H1 (cell line): ENCODE measurements at regions of chr9 and their contacts with region 1.

Region 1: GRCh38 chr9:135602789-135603481 is 36.4 kb downstream of the GLT6D1 start:
- DNase-seq: peak; percentile 17 to 86
- H3K4me3 ChIP-seq: no peak overlapping the region
- H3K27ac ChIP-seq: no peak overlapping the region
- H3K4me1 ChIP-seq: peaks cover 0 to 8% (median 3%) of the 10 kb centered on the region in 4 experiments; a peak in 4 of 7 replicates
- H3K27me3 ChIP-seq: no peaks in the 10 kb centered on the region
- CTCF ChIP-seq: peak in 2 of 3 experiments; percentile 71 to 78; a peak in 3 of 4 replicates
- EP300 ChIP-seq: no peak
- POLR2A ChIP-seq: no peak
- RAD21 ChIP-seq: peak; percentile 51 to 55

Region 2: DNA sequence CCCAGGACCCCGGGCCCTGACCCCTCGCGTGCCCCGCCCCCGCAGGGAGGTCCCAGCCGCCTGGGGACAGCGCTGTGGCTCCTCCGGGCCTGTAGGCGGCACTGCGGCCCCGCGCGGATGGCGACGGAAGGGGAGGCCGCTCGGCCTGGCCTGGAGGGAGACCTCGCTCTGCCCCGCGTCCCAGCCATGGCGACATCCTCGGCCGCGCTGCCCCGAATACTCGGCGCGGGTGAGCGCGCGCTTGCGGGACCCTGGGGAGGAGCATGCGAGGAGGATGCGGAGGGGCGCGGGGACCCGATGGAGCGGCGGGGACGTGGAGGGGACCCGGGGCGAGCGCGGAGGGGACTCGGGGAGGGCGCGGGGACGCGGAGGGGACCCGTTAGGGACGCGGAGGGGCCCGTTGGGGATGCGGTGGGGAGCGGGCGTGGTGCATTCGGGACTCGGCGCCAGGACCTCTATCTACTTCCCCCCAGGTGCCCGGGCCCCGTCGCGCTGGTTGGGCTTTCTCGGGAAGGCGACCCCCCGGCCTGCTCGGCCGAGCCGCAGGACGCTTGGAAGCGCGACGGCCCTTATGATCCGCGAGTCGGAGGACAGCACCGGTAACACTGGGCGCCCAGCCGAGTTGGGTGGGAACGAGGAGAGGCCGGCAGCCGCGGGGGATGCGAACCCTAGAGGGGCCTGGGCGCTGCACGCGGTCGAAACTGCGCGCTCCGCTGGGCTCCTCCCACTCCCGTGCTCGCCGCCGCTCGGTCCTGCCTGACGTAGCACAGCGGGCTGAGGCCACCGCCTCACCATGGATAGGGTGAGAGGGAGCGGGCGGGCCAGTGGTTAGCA is 102.2 kb before region 1 on chr9 and contains the start of gene MRPS2:
- CTCF ChIA-PET with region 1: interaction called, 11 read pairs
- POLR2A ChIA-PET with region 1: no interaction called
- DNase-seq: peak; percentile 62 to 96
- H3K4me3 ChIP-seq: peak within 1 kb of the TSS; percentile 61 to 86 (median 81)
- H3K27ac ChIP-seq: peak within 1 kb of the TSS; percentile 60; the same call in 1 of the 2 replicates
- H3K4me1 ChIP-seq: peaks cover 0 to 15% (median 12%) of the 10 kb centered on the region in 4 experiments; a peak in 6 of 7 replicates
- H3K27me3 ChIP-seq: no peaks in the 10 kb centered on the region; a peak in 1 of 7 replicates
- CTCF ChIP-seq: peak in 2 of 3 experiments; percentile 85 to 87; a peak in 3 of 4 replicates
- EP300 ChIP-seq: no peak
- POLR2A ChIP-seq: peak in 1 of 2 experiments; percentile 64; a peak in 2 of 3 replicates
- RAD21 ChIP-seq: peak; percentile 30 to 51; a peak in 3 of 4 replicates
- total RNA-seq, gene MRPS2: 78.6 and 78.8 TPM in 2 replicates

Region 3: DNA sequence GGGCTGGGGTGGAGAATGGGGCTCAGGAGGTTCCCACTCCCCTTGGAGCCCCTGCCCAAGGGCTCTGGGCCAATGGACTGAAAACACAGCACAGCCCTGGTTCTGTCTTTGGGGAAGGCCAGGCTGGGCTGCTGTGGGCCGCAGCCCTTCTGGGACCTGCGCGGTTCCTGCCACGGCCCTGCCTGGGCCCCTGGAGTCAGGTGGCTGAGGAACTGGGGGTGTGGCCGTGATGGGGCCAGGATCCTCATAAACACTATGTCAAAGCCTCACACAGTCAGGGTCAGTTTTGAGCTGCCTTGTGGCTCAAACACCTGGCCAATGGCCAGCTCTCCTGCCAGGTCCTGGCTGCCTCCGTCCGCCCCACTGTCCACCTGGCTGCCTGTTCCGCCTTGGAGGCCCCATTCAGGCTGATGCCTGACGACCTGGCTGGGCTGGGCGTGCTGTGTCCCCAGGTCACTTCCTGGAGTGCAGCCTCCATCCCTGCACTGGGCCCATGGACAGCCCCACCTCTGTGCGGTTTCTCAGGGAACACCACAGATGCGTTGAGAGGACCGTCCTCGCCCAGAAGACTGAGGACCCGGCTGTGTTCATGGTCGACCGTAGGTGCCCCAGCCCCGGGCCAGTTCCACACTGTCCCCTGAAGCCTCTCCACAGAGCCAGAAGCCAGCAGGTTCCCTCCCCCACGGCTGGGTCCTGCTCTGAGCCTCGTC is 13.9 kb before region 1 on chr9:
- CTCF ChIA-PET with region 1: interaction called, 58 read pairs
- POLR2A ChIA-PET with region 1: interaction called, 3 read pairs
- DNase-seq: peak in 1 of 2 experiments; percentile 34
- H3K4me3 ChIP-seq: no peak overlapping the region
- H3K27ac ChIP-seq: no peak overlapping the region
- H3K4me1 ChIP-seq: no peaks in the 10 kb centered on the region; a peak in 1 of 7 replicates
- H3K27me3 ChIP-seq: no peaks in the 10 kb centered on the region
- CTCF ChIP-seq: no peak
- EP300 ChIP-seq: no peak
- POLR2A ChIP-seq: no peak
- RAD21 ChIP-seq: no peak

Region 4: GRCh38 chr9:135692410-135692809 is 89.5 kb after region 1 on chr9:
- CTCF ChIA-PET with region 1: interaction called, 31 read pairs
- POLR2A ChIA-PET with region 1: no interaction called
- DNase-seq: no peak
- H3K4me3 ChIP-seq: no peak overlapping the region
- H3K27ac ChIP-seq: no peak overlapping the region
- H3K4me1 ChIP-seq: peaks cover 0 to 5% (median 0%) of the 10 kb centered on the region in 4 experiments; a peak in 2 of 7 replicates
- H3K27me3 ChIP-seq: no peaks in the 10 kb centered on the region; a peak in 1 of 7 replicates
- CTCF ChIP-seq: no peak
- EP300 ChIP-seq: no peak
- POLR2A ChIP-seq: no peak
- RAD21 ChIP-seq: no peak

Region 5: DNA sequence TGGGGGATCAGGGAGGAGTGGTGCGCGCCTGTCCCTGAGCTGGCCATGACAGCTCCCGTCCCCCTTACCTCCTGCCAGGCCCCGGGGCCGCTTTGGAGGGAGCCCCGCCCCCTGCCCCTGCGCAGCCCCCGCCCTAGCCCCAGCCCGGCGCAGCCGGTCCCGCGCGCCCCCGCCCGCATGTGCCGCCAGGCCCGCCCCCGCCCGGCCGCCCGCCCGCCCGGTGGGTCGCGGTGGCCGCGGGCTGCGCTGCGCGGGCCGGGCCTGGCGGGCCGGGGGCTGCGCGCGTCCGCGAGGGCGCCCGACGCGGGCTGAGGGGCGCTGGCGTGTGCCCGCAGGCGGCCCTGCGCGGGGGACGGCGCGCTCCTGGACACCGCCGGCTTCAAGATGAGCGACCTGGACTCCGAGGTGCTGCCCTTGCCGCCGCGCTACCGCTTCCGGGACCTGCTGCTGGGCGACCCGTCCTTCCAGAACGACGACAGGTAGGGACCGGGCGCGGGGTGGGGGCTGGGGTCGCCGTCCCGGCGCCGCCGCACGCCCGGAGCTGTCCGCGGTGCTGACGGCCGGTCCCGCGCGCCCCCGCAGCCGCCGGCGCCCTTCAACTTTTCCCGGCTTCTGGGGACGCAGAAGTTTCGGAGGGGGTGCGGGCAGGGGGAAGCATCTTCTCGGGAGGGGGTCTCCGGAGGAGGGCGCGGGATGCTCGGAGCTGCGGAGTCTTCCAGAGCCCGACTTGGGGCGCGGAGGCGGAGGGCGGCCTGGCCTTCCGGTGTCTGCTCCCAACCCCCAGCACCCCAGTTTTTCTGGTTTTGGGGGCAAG is 111.5 kb after region 1 on chr9:
- CTCF ChIA-PET with region 1: interaction called, 14 read pairs
- POLR2A ChIA-PET with region 1: no interaction called
- DNase-seq: peak in 1 of 2 experiments; percentile 84
- H3K4me3 ChIP-seq: peak overlapping the region; percentile 41 to 52 (median 47); a peak in 6 of 8 replicates
- H3K27ac ChIP-seq: no peak overlapping the region
- H3K4me1 ChIP-seq: peaks cover 0 to 3% (median 1%) of the 10 kb centered on the region in 4 experiments; a peak in 2 of 7 replicates
- H3K27me3 ChIP-seq: peaks cover 0 to 25% (median 21%) of the 10 kb centered on the region in 4 experiments; a peak in 6 of 7 replicates
- CTCF ChIP-seq: no peak
- EP300 ChIP-seq: no peak
- POLR2A ChIP-seq: no peak
- RAD21 ChIP-seq: no peak

Region 6: DNA sequence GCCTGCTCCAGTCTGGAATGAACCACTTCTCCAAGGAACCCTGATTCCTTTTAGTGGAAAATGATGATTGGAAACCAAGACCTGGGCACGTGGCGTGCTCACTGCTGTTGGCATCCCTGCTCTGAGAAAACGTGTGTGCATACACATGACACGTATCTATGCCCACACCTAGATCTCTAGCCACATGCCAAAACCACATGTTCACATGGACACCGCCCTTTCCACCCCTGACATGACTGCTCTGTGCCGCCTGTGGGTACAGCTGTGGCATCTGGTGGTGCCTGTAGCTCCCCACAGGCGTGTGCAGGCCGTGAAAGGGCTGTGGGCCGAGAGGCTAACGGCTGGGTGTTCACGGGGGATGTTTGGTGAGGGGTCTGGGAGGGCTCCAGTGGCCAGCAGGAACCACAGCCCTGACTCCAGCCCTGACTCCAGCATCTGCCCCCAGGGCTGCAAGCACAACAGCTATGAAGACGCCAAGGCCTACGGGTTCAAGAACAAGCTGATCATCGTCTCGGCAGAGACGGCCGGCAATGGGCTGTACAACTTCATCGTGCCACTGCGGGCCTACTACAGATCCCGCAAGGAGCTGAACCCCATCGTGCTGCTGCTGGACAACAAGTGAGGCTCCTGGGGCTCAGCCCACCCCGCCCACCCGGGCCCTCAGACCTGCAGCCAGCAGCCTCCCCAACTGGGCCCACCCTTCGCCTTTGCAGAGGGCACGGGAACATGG is 174.1 kb after region 1 on chr9:
- CTCF ChIA-PET with region 1: interaction called, 13 read pairs
- POLR2A ChIA-PET with region 1: no interaction called
- DNase-seq: no peak
- H3K4me3 ChIP-seq: no peak overlapping the region
- H3K27ac ChIP-seq: no peak overlapping the region
- H3K4me1 ChIP-seq: no peaks in the 10 kb centered on the region; a peak in 1 of 7 replicates
- H3K27me3 ChIP-seq: no peaks in the 10 kb centered on the region
- CTCF ChIP-seq: no peak
- EP300 ChIP-seq: no peak
- POLR2A ChIP-seq: no peak
- RAD21 ChIP-seq: no peak

Region 7: GRCh38 chr9:135797507-135798262 is 194.8 kb after region 1 on chr9:
- CTCF ChIA-PET with region 1: interaction called, 15 read pairs
- POLR2A ChIA-PET with region 1: interaction called, 3 read pairs
- DNase-seq: peak; percentile 33 to 94
- H3K4me3 ChIP-seq: no peak overlapping the region
- H3K27ac ChIP-seq: no peak overlapping the region
- H3K4me1 ChIP-seq: no peaks in the 10 kb centered on the region; a peak in 1 of 7 replicates
- H3K27me3 ChIP-seq: no peaks in the 10 kb centered on the region
- CTCF ChIP-seq: peak in 2 of 3 experiments; percentile 86 to 94; a peak in 3 of 4 replicates
- EP300 ChIP-seq: no peak
- POLR2A ChIP-seq: no peak
- RAD21 ChIP-seq: peak; percentile 76 to 83

Region 8: DNA sequence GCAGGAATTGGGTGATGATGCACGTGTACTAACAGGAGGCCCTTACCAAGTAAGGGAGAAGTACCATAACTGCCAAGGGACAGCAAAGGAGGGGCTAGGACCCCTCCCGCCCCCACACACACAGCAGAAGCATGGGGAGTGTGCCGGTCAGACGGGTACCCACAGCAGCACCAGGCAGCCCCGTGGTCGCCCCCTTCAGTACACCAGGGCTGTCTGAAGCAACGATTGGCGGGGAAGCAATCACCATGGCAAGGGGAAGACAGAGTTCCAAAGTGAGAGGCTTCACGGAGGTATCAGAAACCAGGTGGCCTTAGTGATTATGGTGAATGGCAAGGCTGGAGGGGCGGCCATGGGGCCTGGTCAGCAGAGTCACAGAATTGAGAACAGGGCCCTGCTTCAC is 232.2 kb after region 1 on chr9:
- CTCF ChIA-PET with region 1: no interaction called
- POLR2A ChIA-PET with region 1: no interaction called
- DNase-seq: no peak
- H3K4me3 ChIP-seq: no peak overlapping the region
- H3K27ac ChIP-seq: no peak overlapping the region
- H3K4me1 ChIP-seq: peaks cover 0 to 9% (median 4%) of the 10 kb centered on the region in 4 experiments; a peak in 3 of 7 replicates
- H3K27me3 ChIP-seq: no peaks in the 10 kb centered on the region; a peak in 1 of 7 replicates
- CTCF ChIP-seq: peak in 1 of 3 experiments; percentile 36; a peak in 1 of 4 replicates
- EP300 ChIP-seq: no peak
- POLR2A ChIP-seq: no peak
- RAD21 ChIP-seq: no peak; a peak in 1 of 4 replicates